ENCODE measurements at regions of chr6 and their contacts with region 1.

Region 1: GRCh38 chr6:33271458-33272274 is at the starts of genes RPS18 and VPS52:
- DNase-seq: peak; percentile 83 to 97 (median 94)
- H3K4me3 ChIP-seq: peak within 1 kb of the TSS; percentile 79
- H3K4me3 Mint-ChIP-seq: peak within 1 kb of the TSS; percentile 98 to 100 (median 99)
- H3K27ac ChIP-seq: peak within 1 kb of the TSS; percentile 92
- H3K27ac Mint-ChIP-seq: peak within 1 kb of the TSS; percentile 98 to 100 (median 99)
- H3K4me1 ChIP-seq: peaks cover 49% of the 10 kb centered on the region
- H3K4me1 Mint-ChIP-seq: peaks cover 61 to 75% (median 73%) of the 10 kb centered on the region in 3 donors
- H3K27me3 ChIP-seq: no peaks in the 10 kb centered on the region
- H3K27me3 Mint-ChIP-seq: no peaks in the 10 kb centered on the region
- total RNA-seq, gene RPS18: 3,797 to 3,852 TPM
- total RNA-seq, gene VPS52: 57.2 to 58.5 TPM

Region 2: GRCh38 chr6:33288921-33289748 is 17.5 kb after region 1 on chr6 and contains the starts of genes PFDN6 and WDR46:
- CTCF ChIA-PET with region 1: interaction called, 38 read pairs
- POLR2A ChIA-PET with region 1: interaction called, 43 read pairs
- DNase-seq: peak; percentile 65 to 89 (median 84)
- H3K4me3 ChIP-seq: peak within 1 kb of the TSS; percentile 99
- H3K4me3 Mint-ChIP-seq: peak within 1 kb of the TSS; percentile 89 to 99 (median 97)
- H3K27ac ChIP-seq: peak within 1 kb of the TSS; percentile 83
- H3K27ac Mint-ChIP-seq: peak within 1 kb of the TSS; percentile 79 to 99 (median 96)
- H3K4me1 ChIP-seq: peaks cover 24% of the 10 kb centered on the region
- H3K4me1 Mint-ChIP-seq: peaks cover 37 to 52% (median 49%) of the 10 kb centered on the region in 3 donors
- H3K27me3 ChIP-seq: no peaks in the 10 kb centered on the region
- H3K27me3 Mint-ChIP-seq: no peaks in the 10 kb centered on the region
- total RNA-seq, gene PFDN6: 118 to 119 TPM
- total RNA-seq, gene WDR46: 112 to 117 TPM